ENCODE measurements at regions of chr12 and their contacts with region 1.

Region 1: GRCh38 chr12:57832966-57833365 is 13.6 kb downstream of the CTDSP2 start:
- DNase-seq: no peak
- ATAC-seq: no peak

Region 2: GRCh38 chr12:57904848-57905811 is 72.2 kb after region 1 on chr12:
- intact Hi-C with region 1: loop called (anchors 5 kb)
- DNase-seq: peak; percentile 82 to 89
- ATAC-seq: peak; percentile 96

Region 3: DNA sequence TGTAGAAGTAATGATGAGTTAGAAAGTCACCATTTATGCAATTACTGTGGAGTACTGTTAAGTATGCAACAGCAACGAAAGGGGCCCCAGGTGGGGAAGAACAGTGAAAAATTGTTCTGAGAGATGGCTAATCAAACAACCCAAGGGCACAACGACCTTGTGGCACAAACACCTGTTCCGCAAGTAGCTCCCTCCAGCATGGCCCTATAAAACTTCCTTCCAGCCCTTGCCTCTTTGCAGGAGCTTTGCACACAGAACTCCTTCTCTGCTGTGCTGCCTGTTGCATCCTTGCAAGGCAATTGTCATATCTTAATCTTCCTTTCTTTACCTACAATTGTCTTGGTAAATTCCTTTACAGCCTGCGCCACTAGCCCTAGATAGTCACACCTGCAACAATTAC is 85.2 kb after region 1 on chr12:
- intact Hi-C with region 1: no loop called
- DNase-seq: no peak
- ATAC-seq: no peak

Measured in left colon (tissue), 2 donors.